ENCODE measurements at regions of chr5 and their contacts with region 1.

Region 1: GRCh38 chr5:172293054-172293744 is 9.6 kb upstream of the UBTD2 start:
- DNase-seq: peak; percentile 51
- H3K4me3 Mint-ChIP-seq: no peak overlapping the region
- H3K27ac Mint-ChIP-seq: no peak overlapping the region
- H3K4me1 Mint-ChIP-seq: peaks cover 5% of the 10 kb centered on the region
- H3K27me3 Mint-ChIP-seq: peaks cover 27% of the 10 kb centered on the region

Region 2: DNA sequence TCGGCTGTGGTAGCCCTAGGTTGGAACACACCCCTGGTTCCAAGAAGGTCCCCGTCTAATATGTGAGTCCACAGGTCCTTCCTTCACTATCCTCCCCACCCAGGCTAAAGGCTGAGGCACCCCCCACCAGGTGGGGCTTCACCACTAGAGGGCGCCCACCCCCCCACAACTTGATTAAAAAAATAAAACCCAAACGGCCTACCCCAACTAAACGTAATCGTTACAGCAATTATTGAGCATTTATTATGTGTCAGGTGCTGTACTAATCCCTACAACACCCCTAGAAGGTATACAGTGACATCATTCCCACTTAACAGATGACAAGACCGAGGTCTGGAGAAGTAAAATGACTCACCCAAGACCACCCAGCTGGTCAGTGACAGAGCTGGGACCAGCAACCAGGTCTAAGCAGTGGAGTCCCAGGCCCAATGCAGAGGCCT is 808.7 kb before region 1 on chr5:
- intact Hi-C with region 1: loop called (anchors 10 kb)
- DNase-seq: no peak
- H3K4me3 Mint-ChIP-seq: no peak overlapping the region
- H3K27ac Mint-ChIP-seq: no peak overlapping the region
- H3K4me1 Mint-ChIP-seq: peaks cover 6% of the 10 kb centered on the region
- H3K27me3 Mint-ChIP-seq: peaks cover 4% of the 10 kb centered on the region

Region 3: DNA sequence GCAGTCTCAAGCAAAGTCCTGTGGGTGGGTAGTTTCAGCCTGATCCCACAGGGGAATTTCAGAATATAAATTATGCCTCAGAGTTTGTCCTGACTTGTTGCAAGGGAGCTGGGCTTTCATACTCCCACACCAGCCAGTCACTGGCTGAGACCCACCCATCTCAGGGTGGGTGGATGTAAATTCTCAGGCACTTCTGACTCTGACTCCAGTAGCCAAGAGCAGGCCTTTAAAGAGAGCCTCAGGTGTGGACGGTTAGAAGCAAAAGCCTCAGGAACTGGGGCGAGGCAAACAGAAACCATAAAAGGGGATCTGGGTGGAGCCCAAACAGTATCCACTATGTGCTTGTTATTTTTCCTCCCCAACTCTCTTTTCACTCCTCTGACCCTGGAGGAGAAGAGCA is 258.2 kb before region 1 on chr5:
- intact Hi-C with region 1: loop called (anchors 1 kb)
- DNase-seq: no peak
- H3K4me3 Mint-ChIP-seq: no peak overlapping the region
- H3K27ac Mint-ChIP-seq: peak overlapping the region; percentile 20
- H3K4me1 Mint-ChIP-seq: peaks cover 13% of the 10 kb centered on the region
- H3K27me3 Mint-ChIP-seq: peaks cover 2% of the 10 kb centered on the region

Region 4: DNA sequence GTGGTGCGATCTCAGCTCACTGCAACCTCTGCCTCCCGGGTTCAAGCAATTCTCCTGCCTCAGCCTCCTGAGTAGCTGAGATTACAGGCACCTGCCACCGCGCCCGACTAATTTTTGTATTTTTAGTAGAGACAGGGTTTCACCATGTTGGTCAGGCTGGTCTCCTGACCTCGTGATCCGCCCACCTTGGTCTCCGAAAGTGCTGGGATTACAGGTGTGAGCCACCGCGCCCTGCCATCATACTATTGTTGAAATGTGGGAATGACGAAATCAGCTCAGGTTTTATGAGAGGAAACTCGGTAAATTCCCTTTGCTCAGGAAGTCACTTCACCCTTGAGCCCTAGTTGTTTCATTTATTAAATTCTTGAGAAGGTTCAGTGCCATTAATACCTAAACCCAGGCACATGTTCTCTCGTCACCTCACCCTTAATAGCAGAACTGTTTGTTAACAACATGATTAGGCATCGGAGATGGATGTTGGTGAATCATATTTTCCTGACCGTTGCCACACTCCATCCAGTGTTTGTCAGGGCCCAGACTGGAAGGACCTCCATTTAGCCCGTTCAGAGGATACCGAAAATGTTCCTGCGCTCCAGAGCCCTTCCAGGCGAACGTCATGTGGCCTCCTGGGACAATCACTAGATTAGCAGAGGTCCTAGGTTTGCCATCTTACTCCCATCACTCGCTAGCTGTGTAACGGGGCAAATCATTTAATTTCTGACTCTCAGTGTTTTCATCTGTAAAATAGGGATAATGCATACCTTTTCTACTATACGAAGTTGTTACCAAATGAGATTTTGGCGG is 742.9 kb after region 1 on chr5:
- intact Hi-C with region 1: no loop called
- DNase-seq: no peak
- H3K4me3 Mint-ChIP-seq: peak overlapping the region; percentile 77
- H3K27ac Mint-ChIP-seq: peak overlapping the region; percentile 92
- H3K4me1 Mint-ChIP-seq: peaks cover 54% of the 10 kb centered on the region
- H3K27me3 Mint-ChIP-seq: no peaks in the 10 kb centered on the region